ENCODE measurements at regions of chr2 and their contacts with region 1.

Region 1: DNA sequence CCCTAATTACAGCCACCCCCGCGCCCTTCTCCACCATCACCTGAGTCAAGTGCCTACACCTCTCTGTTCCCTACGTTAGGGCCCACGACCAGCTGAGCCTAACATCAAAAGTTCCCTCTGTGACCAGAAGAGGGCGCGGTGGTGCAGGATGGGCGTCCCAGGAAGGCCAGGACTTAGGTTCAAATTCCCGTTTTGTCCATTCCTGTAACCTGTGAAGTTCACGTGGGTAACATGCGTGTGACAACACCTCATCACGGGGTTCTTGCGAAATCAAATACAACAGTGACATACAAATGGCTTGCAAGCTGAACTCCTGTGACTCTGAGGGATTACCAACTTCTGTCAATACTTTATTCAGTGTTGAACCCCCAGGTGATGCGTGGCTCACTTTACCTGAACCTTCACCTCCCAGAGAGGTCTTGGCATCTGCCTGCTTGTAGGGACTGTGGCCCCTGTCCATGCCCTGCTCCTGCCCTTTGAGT is 207.9 kb downstream of the ARL4C start:
- DNase-seq: peak; percentile 82
- H3K4me3 Mint-ChIP-seq: peak overlapping the region; percentile 57
- H3K27ac Mint-ChIP-seq: peak overlapping the region; percentile 99
- H3K4me1 Mint-ChIP-seq: peaks cover 87% of the 10 kb centered on the region
- H3K27me3 Mint-ChIP-seq: no peaks in the 10 kb centered on the region

Region 2: DNA sequence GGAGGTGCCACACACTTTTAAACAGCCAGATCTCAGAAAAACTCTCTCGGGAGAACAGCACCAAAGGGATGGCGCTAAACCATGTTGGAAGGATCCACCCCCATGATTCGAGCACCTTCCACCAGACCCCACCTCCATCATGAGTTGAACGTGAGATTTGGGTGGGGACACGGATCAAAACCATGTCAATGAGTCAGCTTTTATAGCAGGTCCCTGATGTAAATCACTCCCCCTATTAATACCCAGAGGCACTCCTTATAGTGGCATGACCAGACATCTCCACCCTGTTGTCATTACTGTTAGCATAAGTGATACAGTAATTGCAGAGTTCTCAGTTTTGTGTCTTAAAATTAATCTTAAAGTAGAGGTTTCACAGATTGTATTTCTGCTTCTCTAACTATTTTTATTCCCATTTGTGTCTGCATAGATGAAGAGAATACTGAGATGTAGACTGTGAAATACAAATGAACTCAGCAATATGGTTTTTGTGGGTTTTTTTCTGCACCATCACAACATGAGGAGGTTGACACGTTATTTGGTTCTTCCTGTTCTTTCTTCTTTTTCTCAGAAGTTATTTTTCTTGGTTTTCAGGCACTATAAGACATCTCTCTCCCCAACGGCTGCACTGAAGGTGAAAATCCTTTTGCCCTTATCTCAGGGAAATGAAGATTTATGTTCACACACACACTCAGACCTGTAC is 10.3 kb before region 1 on chr2:
- CTCF ChIA-PET with region 1: interaction called, 21 read pairs
- DNase-seq: peak; percentile 46
- H3K4me3 Mint-ChIP-seq: no peak overlapping the region
- H3K27ac Mint-ChIP-seq: peak overlapping the region; percentile 91
- H3K4me1 Mint-ChIP-seq: peaks cover 72% of the 10 kb centered on the region
- H3K27me3 Mint-ChIP-seq: no peaks in the 10 kb centered on the region

Region 3: DNA sequence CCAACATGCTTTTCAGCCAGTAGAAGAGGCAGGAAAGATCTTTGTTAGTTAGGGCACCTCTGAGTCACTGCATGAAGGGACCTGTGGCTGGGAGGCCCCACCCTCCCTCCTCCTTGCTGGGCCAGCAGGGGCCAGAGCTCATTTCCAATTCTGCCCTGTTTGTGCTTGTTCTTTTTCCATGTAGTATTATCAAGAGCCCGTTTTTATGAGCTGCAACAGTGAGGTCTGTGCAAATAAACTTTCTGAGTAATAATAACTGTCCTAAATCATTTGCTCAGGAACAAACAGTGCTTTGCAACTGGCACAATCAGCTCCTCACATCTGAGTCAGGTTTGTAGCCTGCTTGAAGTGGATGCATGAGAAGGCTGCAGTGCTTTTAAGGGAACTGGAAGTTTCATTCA is 79.8 kb after region 1 on chr2:
- CTCF ChIA-PET with region 1: interaction called, 19 read pairs
- DNase-seq: peak; percentile 67
- H3K4me3 Mint-ChIP-seq: no peak overlapping the region
- H3K27ac Mint-ChIP-seq: peak overlapping the region; percentile 83
- H3K4me1 Mint-ChIP-seq: peaks cover 80% of the 10 kb centered on the region
- H3K27me3 Mint-ChIP-seq: no peaks in the 10 kb centered on the region

Region 4: DNA sequence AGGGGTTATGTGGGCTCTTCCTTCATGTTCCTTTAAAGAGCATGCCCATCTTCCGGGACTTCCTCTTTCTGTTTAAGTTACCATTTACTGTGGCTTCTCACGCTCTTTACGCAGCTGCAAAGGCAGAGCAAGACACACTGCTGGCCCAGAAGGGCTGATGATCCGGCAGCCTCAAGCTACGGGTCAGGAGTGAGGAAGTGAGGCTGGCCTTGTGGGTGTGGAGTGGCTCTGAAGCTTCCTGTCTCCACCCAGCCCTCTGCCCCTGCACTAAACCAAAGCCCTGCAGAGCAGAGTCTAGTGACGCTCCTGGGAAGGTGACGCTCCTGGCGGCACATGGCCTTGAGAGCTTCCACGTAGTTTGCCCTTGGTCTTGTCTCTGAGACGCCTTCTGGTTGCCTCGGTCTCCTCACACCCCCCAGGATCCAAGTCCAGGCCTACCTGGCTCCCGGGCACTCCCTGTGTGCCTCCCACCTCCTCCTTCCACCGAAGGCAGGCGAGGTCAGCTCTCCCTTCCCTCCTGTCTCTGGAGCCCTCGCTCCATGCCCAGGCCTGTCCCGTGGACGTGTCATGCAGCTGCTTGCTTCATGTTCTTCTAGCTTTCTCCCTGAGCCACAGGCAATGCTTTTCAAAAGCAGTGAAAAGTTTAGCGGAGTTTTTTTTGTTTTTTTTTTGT is 157.5 kb after region 1 on chr2:
- CTCF ChIA-PET with region 1: interaction called, 15 read pairs
- DNase-seq: peak; percentile 91
- H3K4me3 Mint-ChIP-seq: peak overlapping the region; percentile 64
- H3K27ac Mint-ChIP-seq: peak overlapping the region; percentile 99
- H3K4me1 Mint-ChIP-seq: peaks cover 94% of the 10 kb centered on the region
- H3K27me3 Mint-ChIP-seq: no peaks in the 10 kb centered on the region

Region 5: GRCh38 chr2:234488913-234489451 is 200.0 kb after region 1 on chr2:
- CTCF ChIA-PET with region 1: interaction called, 70 read pairs
- DNase-seq: peak; percentile 88
- H3K4me3 Mint-ChIP-seq: peak overlapping the region; percentile 90
- H3K27ac Mint-ChIP-seq: peak overlapping the region; percentile 100
- H3K4me1 Mint-ChIP-seq: peaks cover 72% of the 10 kb centered on the region
- H3K27me3 Mint-ChIP-seq: no peaks in the 10 kb centered on the region

Measured in activated naive CD4-positive, alpha-beta T cell treated with anti-CD3 and anti-CD28 coated beads, Interleukin-2, amount 10 ng/mL, durations not matched to agents 7 days and 5 days (primary cell).